Astrocyte of the cerebellum (primary cell): ENCODE measurements at regions of chr9 and their contacts with region 1.

Region 1: GRCh38 chr9:111572950-111573604 is 26.4 kb downstream of the PTGR1 start:
- DNase-seq: peak; percentile 97
- H3K4me3 ChIP-seq: no peak overlapping the region
- CTCF ChIP-seq: no peak

Region 2: GRCh38 chr9:111601237-111602018 is 28.4 kb after region 1 on chr9:
- in situ Hi-C with region 1: no loop called
- DNase-seq: no peak
- H3K4me3 ChIP-seq: no peak overlapping the region
- CTCF ChIP-seq: no peak

Region 3: GRCh38 chr9:111613441-111614039 is 40.5 kb after region 1 on chr9:
- in situ Hi-C with region 1: loop called (anchors 5 kb)
- DNase-seq: no peak
- H3K4me3 ChIP-seq: no peak overlapping the region
- CTCF ChIP-seq: no peak